Astrocyte of the cerebellum (primary cell): ENCODE measurements at regions of chr22 and their contacts with region 1.

Region 1: DNA sequence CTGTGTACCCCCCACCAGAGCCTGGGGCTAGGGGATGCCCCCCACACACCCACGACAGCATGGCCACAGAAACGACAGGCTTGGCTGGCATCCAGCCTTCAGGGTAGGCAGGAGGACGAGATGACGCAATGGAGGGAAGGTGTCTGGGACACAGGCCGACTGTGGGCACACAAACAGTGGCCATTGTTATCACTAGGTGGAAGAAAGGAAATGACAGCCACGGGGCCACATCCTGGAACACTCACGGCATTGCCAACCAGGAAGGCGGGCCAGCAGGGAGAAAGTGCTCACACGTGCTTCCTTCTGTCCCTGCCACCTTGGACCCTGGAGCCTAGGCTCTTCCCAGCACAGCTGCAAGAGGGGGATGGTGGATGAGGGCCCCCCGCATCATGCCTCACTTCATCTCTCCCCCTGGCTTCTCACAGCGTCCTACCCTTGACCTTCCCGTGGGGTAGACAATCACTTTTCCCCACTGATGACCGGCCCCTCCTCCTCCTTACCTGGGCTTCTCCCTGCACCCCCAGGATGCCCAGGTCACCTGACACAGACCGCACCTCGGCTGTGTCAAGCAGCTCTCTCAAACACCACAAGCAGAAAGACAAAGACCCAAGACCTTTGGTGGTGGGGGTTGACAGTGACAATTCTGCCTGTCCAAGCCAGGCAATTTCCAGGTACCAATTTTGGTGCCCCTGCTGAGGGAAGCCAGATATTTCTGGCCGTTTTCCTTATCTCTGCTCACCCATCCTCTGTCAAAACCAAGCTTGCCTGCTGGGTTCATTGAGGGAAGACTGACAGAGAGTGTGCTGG is 8.6 kb downstream of the PLA2G6 start:
- DNase-seq: no peak
- H3K4me3 ChIP-seq: no peak overlapping the region
- CTCF ChIP-seq: no peak

Region 2: GRCh38 chr22:38097557-38098409 is 75.3 kb before region 1 on chr22:
- in situ Hi-C with region 1: loop called (anchors 5 kb)
- DNase-seq: no peak
- H3K4me3 ChIP-seq: no peak overlapping the region
- CTCF ChIP-seq: peak; percentile 52

Region 3: GRCh38 chr22:38109371-38110001 is 63.5 kb before region 1 on chr22:
- in situ Hi-C with region 1: no loop called
- DNase-seq: no peak
- H3K4me3 ChIP-seq: no peak overlapping the region
- CTCF ChIP-seq: no peak